ENCODE measurements at regions of chr18 and their contacts with region 1.

Region 1: DNA sequence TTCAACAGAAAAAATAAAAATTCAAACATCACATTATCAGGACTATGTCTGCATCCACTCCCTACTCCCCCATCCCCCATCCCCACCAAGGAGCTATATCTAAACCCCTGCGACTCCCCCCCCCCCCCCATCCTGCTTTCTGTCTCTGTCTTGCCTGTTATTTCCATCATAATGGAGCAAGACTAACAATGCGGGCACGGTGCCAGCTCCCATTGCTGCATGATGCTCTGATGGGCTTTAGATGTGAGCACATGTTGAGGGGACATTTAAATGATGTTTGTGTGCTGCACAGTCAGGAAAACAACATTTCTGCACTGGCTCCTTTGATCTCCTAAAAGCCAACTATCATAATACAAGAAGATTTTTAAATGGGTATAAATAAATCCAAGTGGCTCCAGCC is 644.2 kb upstream of the SETBP1 start:
- DNase-seq: peak in 4 of 5 donors; percentile 7 to 59 (median 42)
- ATAC-seq: no peak
- H3K4me3 ChIP-seq: no peak overlapping the region
- H3K27ac ChIP-seq: no peak overlapping the region
- H3K4me1 ChIP-seq: no peaks in the 10 kb centered on the region
- H3K27me3 ChIP-seq: no peaks in the 10 kb centered on the region
- CTCF ChIP-seq: no peak
- POLR2A ChIP-seq: no peak

Region 2: GRCh38 chr18:43847164-43848091 is 189.1 kb before region 1 on chr18:
- intact Hi-C with region 1: no loop called
- DNase-seq: no peak
- ATAC-seq: peak in 1 of 4 donors; percentile 47
- H3K4me3 ChIP-seq: no peak overlapping the region
- H3K27ac ChIP-seq: peak overlapping the region in 9 of 12 donors; percentile 30 to 60 (median 38)
- H3K4me1 ChIP-seq: peaks cover 0 to 12% (median 0%) of the 10 kb centered on the region in 12 donors
- H3K27me3 ChIP-seq: no peaks in the 10 kb centered on the region
- CTCF ChIP-seq: no peak
- POLR2A ChIP-seq: no peak

Region 3: GRCh38 chr18:43919551-43919950 is 117.0 kb before region 1 on chr18:
- intact Hi-C with region 1: no loop called
- DNase-seq: no peak
- ATAC-seq: peak in 1 of 4 donors; percentile 39
- H3K4me3 ChIP-seq: no peak overlapping the region
- H3K27ac ChIP-seq: no peak overlapping the region
- H3K4me1 ChIP-seq: no peaks in the 10 kb centered on the region
- H3K27me3 ChIP-seq: no peaks in the 10 kb centered on the region
- CTCF ChIP-seq: no peak
- POLR2A ChIP-seq: no peak

Region 4: GRCh38 chr18:43970656-43971055 is 65.8 kb before region 1 on chr18:
- intact Hi-C with region 1: loop called in 1 of 10 experiments (anchors 10 kb)
- DNase-seq: no peak
- ATAC-seq: no peak
- H3K4me3 ChIP-seq: no peak overlapping the region
- H3K27ac ChIP-seq: no peak overlapping the region
- H3K4me1 ChIP-seq: peaks cover 0 to 3% (median 0%) of the 10 kb centered on the region in 12 donors
- H3K27me3 ChIP-seq: no peaks in the 10 kb centered on the region
- CTCF ChIP-seq: no peak
- POLR2A ChIP-seq: no peak

Region 5: GRCh38 chr18:44093253-44093652 is 56.8 kb after region 1 on chr18:
- intact Hi-C with region 1: no loop called
- DNase-seq: no peak
- ATAC-seq: no peak
- H3K4me3 ChIP-seq: no peak overlapping the region
- H3K27ac ChIP-seq: no peak overlapping the region
- H3K4me1 ChIP-seq: no peaks in the 10 kb centered on the region
- H3K27me3 ChIP-seq: no peaks in the 10 kb centered on the region
- CTCF ChIP-seq: no peak
- POLR2A ChIP-seq: no peak

Region 6: DNA sequence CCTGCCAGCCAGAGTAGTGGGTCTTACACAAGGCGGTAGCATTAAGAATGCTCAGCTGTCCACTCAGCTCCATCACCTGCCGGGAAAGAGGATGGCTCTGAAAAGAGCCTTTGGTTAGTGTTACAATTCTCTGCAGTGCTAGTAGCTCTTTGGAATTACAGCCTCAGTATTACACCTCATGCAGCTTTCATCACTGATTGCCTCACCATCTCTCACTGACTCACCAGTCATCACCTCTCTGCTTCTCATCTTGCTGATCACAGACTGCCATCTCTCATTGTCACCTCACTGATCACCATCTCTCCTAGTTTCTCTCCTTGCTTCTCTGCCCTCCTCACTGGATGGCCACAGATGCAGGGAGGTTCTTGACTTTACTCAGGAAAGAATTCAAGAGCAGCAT is 70.7 kb after region 1 on chr18:
- intact Hi-C with region 1: no loop called
- DNase-seq: no peak
- ATAC-seq: no peak
- H3K4me3 ChIP-seq: no peak overlapping the region
- H3K27ac ChIP-seq: no peak overlapping the region
- H3K4me1 ChIP-seq: no peaks in the 10 kb centered on the region
- H3K27me3 ChIP-seq: no peaks in the 10 kb centered on the region
- CTCF ChIP-seq: no peak
- POLR2A ChIP-seq: no peak

Measured in heart left ventricle (tissue), 16 donors.